MCF 10A (cell line): ENCODE measurements at regions of chr5 and their contacts with region 1.

Region 1: DNA sequence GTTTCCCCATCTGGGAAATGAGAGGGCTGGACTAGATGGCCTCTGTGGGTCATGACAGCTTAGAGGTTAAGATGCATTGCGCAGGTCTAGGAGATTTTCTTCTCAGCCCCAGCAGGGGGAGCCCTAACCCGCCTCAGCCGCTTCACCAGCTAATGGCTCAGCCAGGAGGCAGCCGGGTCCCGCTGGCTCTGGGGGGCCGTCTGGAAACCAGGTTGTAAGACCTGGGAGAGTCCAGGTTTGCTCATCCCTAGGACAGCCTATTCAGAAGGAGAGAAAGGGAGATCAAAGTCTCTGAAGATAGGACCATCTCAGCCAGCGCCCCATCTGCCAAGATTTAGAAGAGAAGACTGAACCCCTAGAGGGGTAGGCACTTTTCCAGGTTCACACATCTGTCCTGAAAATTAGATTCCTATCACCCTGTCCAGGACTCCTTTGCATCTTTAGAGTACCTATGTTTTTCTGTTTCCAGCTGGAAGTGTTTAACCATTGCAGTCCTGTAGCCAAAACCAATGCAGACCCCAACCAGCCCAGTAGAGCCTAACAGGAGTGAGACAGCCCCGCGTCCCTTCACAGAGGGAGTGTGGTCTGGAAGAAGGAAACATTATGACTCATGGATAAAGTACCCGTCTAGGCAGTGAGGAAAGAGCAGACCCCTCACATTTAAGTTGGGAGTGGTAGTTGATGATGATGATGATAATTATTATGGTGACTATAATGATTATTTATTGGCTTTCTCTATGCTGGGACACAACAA is 27.5 kb downstream of the SPARC start:
- DNase-seq: peak; percentile 87
- H3K4me3 Mint-ChIP-seq: no peak overlapping the region
- H3K27ac Mint-ChIP-seq: no peak overlapping the region
- H3K4me1 Mint-ChIP-seq: peaks cover 22% of the 10 kb centered on the region
- H3K27me3 Mint-ChIP-seq: no peaks in the 10 kb centered on the region
- CTCF ChIP-seq: peak; percentile 98

Region 2: GRCh38 chr5:150778517-150779396 is 880.4 kb before region 1 on chr5 and contains the start of gene SMIM3:
- CTCF ChIA-PET with region 1: no interaction called
- POLR2A ChIA-PET with region 1: no interaction called
- intact Hi-C with region 1: no loop called
- DNase-seq: peak; percentile 84
- H3K4me3 Mint-ChIP-seq: peak within 1 kb of the TSS; percentile 99
- H3K27ac Mint-ChIP-seq: peak within 1 kb of the TSS; percentile 91
- H3K4me1 Mint-ChIP-seq: peaks cover 47% of the 10 kb centered on the region
- H3K27me3 Mint-ChIP-seq: no peaks in the 10 kb centered on the region
- CTCF ChIP-seq: peak; percentile 54
- total RNA-seq, gene SMIM3: 21.7 and 26.1 TPM in 2 replicates

Region 3: GRCh38 chr5:150816946-150817345 is 842.2 kb before region 1 on chr5:
- CTCF ChIA-PET with region 1: no interaction called
- POLR2A ChIA-PET with region 1: no interaction called
- intact Hi-C with region 1: no loop called
- DNase-seq: no peak
- H3K4me3 Mint-ChIP-seq: no peak overlapping the region
- H3K27ac Mint-ChIP-seq: no peak overlapping the region
- H3K4me1 Mint-ChIP-seq: no peaks in the 10 kb centered on the region
- H3K27me3 Mint-ChIP-seq: no peaks in the 10 kb centered on the region
- CTCF ChIP-seq: no peak

Region 4: GRCh38 chr5:151461312-151461711 is 197.9 kb before region 1 on chr5:
- CTCF ChIA-PET with region 1: interaction called, 19 read pairs
- POLR2A ChIA-PET with region 1: no interaction called
- intact Hi-C with region 1: no loop called
- DNase-seq: no peak
- H3K4me3 Mint-ChIP-seq: no peak overlapping the region
- H3K27ac Mint-ChIP-seq: no peak overlapping the region
- H3K4me1 Mint-ChIP-seq: no peaks in the 10 kb centered on the region
- H3K27me3 Mint-ChIP-seq: no peaks in the 10 kb centered on the region
- CTCF ChIP-seq: no peak

Region 5: GRCh38 chr5:151569132-151570046 is 89.8 kb before region 1 on chr5:
- CTCF ChIA-PET with region 1: interaction called, 18 read pairs
- POLR2A ChIA-PET with region 1: no interaction called
- intact Hi-C with region 1: no loop called
- DNase-seq: peak; percentile 42
- H3K4me3 Mint-ChIP-seq: no peak overlapping the region
- H3K27ac Mint-ChIP-seq: peak overlapping the region; percentile 57
- H3K4me1 Mint-ChIP-seq: peaks cover 54% of the 10 kb centered on the region
- H3K27me3 Mint-ChIP-seq: no peaks in the 10 kb centered on the region
- CTCF ChIP-seq: no peak

Region 6: DNA sequence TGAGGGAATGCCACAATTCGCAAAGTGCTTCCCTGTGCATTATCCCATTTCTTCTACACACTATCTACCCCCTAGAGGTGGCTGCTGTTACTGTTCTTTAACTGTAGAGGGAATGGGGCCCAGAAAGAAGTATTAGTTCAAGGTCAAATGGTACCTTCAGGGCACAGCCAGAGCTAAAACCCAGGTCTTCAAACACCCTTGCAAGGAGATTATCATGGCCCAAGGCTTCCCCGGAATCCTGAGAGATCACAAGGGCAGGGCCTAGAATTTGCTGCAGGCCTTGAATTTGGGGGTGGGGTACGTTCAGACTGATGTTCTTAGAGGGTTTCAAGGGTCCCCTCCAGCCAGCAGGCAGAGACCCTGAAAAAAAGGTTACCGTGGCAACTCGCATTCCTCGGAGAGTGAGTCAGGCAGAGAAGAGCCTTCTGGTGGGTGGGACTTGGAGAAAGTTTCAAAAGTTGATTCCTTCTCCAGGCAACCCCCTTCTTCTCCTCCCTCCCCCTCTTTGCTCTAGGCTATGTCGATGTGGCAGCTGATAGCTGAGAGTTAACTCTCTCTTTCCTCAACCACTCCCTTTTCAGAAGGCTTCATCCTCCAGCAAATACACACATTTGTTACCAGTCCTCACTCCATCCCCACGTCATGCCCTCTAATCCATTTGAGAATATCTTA is 25.6 kb after region 1 on chr5:
- CTCF ChIA-PET with region 1: interaction called, 30 read pairs
- POLR2A ChIA-PET with region 1: interaction called, 4 read pairs
- intact Hi-C with region 1: no loop called
- DNase-seq: peak; percentile 88
- H3K4me3 Mint-ChIP-seq: peak overlapping the region; percentile 26
- H3K27ac Mint-ChIP-seq: peak overlapping the region; percentile 84
- H3K4me1 Mint-ChIP-seq: peaks cover 45% of the 10 kb centered on the region
- H3K27me3 Mint-ChIP-seq: no peaks in the 10 kb centered on the region
- CTCF ChIP-seq: peak; percentile 25

Region 7: DNA sequence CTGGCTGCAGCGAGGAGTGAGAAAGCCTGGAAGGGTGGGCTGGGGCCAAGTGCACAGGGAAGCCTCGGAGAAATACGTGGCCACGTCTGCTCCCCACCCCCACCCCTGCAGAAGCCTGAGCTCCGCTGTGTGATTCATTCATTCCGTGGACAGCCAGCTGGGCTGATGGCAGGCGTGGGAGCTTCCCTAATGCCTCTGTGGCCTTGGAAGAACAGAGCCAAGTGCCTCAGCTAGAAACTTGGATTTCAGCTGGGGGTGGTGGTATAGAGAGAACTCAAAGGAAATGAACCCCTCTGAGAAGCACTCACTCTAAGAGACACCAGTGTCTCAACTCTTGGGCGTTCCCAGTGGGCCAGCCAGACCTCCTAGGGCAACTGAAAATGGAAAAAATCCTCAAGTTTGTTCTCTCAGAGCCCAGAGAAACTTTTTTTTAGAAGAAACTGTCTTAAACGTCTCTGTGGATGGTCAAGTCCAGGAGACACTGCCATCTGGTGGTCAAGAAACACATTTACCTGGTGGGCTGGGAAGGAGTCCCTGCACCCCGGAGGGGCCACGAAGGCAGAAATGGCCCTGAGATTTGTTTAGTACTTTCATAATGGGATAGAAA is 81.3 kb after region 1 on chr5:
- CTCF ChIA-PET with region 1: interaction called, 652 read pairs
- POLR2A ChIA-PET with region 1: interaction called, 22 read pairs
- intact Hi-C with region 1: loop called (anchors 1 kb)
- DNase-seq: peak; percentile 80
- H3K4me3 Mint-ChIP-seq: peak overlapping the region; percentile 45
- H3K27ac Mint-ChIP-seq: peak overlapping the region; percentile 86
- H3K4me1 Mint-ChIP-seq: peaks cover 55% of the 10 kb centered on the region
- H3K27me3 Mint-ChIP-seq: no peaks in the 10 kb centered on the region
- CTCF ChIP-seq: peak; percentile 93

Region 8: GRCh38 chr5:151811593-151812321 is 152.6 kb after region 1 on chr5:
- CTCF ChIA-PET with region 1: interaction called, 15 read pairs
- POLR2A ChIA-PET with region 1: interaction called, 3 read pairs
- intact Hi-C with region 1: no loop called
- DNase-seq: peak; percentile 57
- H3K4me3 Mint-ChIP-seq: no peak overlapping the region
- H3K27ac Mint-ChIP-seq: peak overlapping the region; percentile 58
- H3K4me1 Mint-ChIP-seq: peaks cover 44% of the 10 kb centered on the region
- H3K27me3 Mint-ChIP-seq: no peaks in the 10 kb centered on the region
- CTCF ChIP-seq: no peak

Region 9: GRCh38 chr5:152205804-152206203 is 546.6 kb after region 1 on chr5:
- CTCF ChIA-PET with region 1: no interaction called
- POLR2A ChIA-PET with region 1: no interaction called
- intact Hi-C with region 1: no loop called
- DNase-seq: no peak
- H3K4me3 Mint-ChIP-seq: no peak overlapping the region
- H3K27ac Mint-ChIP-seq: no peak overlapping the region
- H3K4me1 Mint-ChIP-seq: no peaks in the 10 kb centered on the region
- H3K27me3 Mint-ChIP-seq: no peaks in the 10 kb centered on the region
- CTCF ChIP-seq: no peak

Region 10: DNA sequence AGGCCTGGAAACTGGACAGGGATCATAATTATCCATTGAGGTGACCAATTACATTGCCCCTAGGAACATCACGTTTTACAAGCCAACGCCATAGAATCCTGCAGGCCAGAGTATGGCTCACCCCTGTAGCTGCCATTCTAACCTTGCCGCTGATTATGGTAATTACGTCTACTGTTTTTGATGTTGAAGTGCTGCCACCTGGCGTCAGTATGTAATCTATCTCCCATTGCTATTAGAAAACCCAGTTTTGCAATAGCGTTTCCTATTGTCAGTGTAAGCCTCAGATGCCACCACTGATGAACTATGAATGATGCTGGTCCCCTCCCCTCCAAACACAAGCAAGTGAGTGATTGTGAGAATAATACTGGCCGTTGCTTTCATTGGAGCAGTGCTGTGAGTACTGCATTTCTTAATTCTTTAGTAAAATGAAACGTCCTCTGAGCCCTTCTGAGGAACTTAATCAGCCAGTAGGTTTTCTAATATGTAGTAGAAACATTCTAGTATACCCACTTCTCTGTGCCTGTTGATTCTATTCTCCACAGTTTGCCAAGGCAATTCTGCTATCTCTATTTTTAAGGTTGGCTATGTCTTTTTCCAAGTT is 846.4 kb after region 1 on chr5:
- CTCF ChIA-PET with region 1: no interaction called
- POLR2A ChIA-PET with region 1: no interaction called
- intact Hi-C with region 1: loop called (anchors 2 kb)
- DNase-seq: peak; percentile 81
- H3K4me3 Mint-ChIP-seq: no peak overlapping the region
- H3K27ac Mint-ChIP-seq: no peak overlapping the region
- H3K4me1 Mint-ChIP-seq: no peaks in the 10 kb centered on the region
- H3K27me3 Mint-ChIP-seq: peaks cover 33% of the 10 kb centered on the region
- CTCF ChIP-seq: peak; percentile 68